Activated B cell treated with CpG ODN at 0.5 μM for 24 hours (primary cell): ENCODE measurements at regions of chr2 and their contacts with region 1.

Region 1: DNA sequence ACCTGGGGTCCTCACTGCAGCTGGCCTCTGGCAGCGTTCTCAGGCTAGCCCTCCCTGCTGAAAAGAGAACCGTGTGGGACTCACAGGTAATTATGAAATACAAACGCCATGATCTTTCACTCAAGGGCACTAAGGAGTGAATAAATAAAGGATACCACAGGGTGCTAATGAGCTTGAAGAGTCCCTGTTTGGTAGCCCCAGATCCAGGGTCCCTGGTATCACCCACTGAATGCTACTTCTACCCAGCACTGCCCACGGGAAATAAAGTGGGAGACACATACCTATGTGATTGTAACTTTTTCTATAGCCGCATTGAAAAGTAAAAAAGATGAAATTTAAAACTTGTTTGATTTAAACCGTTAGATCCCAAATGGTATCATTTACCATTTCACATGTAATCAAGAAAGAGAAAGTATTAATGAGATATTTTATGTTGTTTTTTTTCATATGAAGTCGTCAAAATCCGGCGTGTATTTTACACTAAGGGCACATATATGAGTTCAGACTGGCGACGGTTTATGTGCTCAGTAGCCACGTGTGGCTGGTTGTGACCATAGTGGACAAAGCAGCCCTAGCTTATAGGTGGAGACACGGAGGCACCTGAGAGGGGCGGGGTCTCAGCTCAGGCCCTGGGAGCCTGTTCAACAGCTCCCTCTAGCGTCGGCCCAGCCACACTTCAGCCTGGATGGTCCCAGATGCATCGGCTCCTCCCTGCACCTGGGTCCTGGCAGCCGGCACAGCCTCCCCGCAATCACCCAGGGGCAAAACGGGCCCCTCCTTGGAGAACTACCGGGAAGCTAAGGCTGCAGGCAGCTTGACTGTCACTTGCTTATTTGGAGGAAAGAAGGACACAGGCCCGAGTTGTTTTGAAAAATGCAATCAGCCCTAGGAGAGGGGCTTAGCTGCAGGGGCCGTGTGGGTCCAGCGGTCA is 39.2 kb downstream of the ODC1 start:
- DNase-seq: peak; percentile 70
- ATAC-seq: peak; percentile 77
- H3K4me3 Mint-ChIP-seq: peak overlapping the region; percentile 73
- H3K27ac Mint-ChIP-seq: peak overlapping the region; percentile 92
- H3K4me1 Mint-ChIP-seq: peaks cover 66% of the 10 kb centered on the region
- H3K27me3 Mint-ChIP-seq: no peaks in the 10 kb centered on the region
- CTCF ChIP-seq: peak; percentile 51

Region 2: GRCh38 chr2:8737571-8738175 is 1671.2 kb before region 1 on chr2:
- CTCF ChIA-PET with region 1: no interaction called
- POLR2A ChIA-PET with region 1: no interaction called
- intact Hi-C with region 1: no loop called
- DNase-seq: no peak
- ATAC-seq: no peak
- H3K4me3 Mint-ChIP-seq: no peak overlapping the region
- H3K27ac Mint-ChIP-seq: no peak overlapping the region
- H3K4me1 Mint-ChIP-seq: no peaks in the 10 kb centered on the region
- H3K27me3 Mint-ChIP-seq: no peaks in the 10 kb centered on the region
- CTCF ChIP-seq: no peak

Region 3: DNA sequence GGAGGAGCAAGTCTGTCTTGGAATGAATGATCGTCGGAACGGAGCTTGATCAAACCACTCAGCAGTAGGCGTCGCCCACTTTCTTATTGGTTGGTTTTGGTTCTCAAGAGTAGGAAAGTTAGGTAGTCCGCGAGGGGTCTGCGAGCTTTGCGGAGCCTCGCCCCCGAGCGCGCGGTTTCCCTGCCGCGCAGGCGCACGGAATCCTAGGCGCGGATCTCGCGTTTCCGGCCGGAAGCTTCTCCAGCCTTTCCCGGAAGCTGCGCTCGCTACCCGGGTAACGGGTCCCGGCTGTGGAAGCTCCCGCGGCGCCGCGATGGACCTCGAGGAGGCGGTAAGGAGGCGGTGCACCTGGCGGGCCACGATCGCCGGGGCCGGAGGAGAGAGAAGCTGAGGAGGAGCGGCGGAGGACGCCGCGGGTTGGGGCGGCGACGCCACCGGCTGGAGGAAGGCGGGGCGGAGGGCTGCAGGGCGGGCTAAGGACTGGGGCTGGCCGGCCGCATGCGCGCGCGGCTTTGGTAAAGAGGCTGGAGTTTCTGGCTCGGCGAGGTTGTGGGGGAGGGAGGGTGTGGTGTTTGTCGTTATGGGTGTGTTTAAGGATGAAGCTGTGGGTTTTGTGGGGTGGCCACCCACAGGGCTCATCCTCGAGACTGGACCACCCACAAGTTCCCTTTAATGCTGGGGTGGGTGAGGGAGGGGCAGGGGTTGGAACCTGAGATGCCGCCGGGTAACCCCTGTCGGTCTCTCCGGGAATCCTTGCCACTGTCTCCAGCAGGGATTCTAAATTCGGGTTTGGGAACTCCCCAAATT is 565.5 kb before region 1 on chr2 and contains the start of gene TAF1B:
- CTCF ChIA-PET with region 1: no interaction called
- POLR2A ChIA-PET with region 1: interaction called, 15 read pairs
- intact Hi-C with region 1: no loop called
- DNase-seq: peak; percentile 86
- ATAC-seq: peak; percentile 87
- H3K4me3 Mint-ChIP-seq: peak within 1 kb of the TSS; percentile 94
- H3K27ac Mint-ChIP-seq: peak within 1 kb of the TSS; percentile 91
- H3K4me1 Mint-ChIP-seq: peaks cover 34% of the 10 kb centered on the region
- H3K27me3 Mint-ChIP-seq: no peaks in the 10 kb centered on the region
- CTCF ChIP-seq: no peak
- total RNA-seq, gene TAF1B: 26.4 and 28.7 TPM in 2 replicates

Region 4: GRCh38 chr2:10122386-10123280 is 286.3 kb before region 1 on chr2 and contains the start of gene RRM2:
- CTCF ChIA-PET with region 1: interaction called, 82 read pairs
- POLR2A ChIA-PET with region 1: interaction called, 4 read pairs
- intact Hi-C with region 1: loop called (anchors 1 kb)
- DNase-seq: peak; percentile 77
- ATAC-seq: peak; percentile 82
- H3K4me3 Mint-ChIP-seq: peak within 1 kb of the TSS; percentile 97
- H3K27ac Mint-ChIP-seq: peak within 1 kb of the TSS; percentile 12
- H3K4me1 Mint-ChIP-seq: peaks cover 35% of the 10 kb centered on the region
- H3K27me3 Mint-ChIP-seq: peaks cover 8% of the 10 kb centered on the region
- CTCF ChIP-seq: no peak
- total RNA-seq, gene RRM2: 8.6 and 9.3 TPM in 2 replicates

Region 5: GRCh38 chr2:10267551-10268465 is 141.1 kb before region 1 on chr2:
- CTCF ChIA-PET with region 1: interaction called, 46 read pairs
- POLR2A ChIA-PET with region 1: interaction called, 6 read pairs
- intact Hi-C with region 1: loop called (anchors 1 kb)
- DNase-seq: no peak
- ATAC-seq: no peak
- H3K4me3 Mint-ChIP-seq: no peak overlapping the region
- H3K27ac Mint-ChIP-seq: no peak overlapping the region
- H3K4me1 Mint-ChIP-seq: peaks cover 6% of the 10 kb centered on the region
- H3K27me3 Mint-ChIP-seq: no peaks in the 10 kb centered on the region
- CTCF ChIP-seq: no peak

Region 6: DNA sequence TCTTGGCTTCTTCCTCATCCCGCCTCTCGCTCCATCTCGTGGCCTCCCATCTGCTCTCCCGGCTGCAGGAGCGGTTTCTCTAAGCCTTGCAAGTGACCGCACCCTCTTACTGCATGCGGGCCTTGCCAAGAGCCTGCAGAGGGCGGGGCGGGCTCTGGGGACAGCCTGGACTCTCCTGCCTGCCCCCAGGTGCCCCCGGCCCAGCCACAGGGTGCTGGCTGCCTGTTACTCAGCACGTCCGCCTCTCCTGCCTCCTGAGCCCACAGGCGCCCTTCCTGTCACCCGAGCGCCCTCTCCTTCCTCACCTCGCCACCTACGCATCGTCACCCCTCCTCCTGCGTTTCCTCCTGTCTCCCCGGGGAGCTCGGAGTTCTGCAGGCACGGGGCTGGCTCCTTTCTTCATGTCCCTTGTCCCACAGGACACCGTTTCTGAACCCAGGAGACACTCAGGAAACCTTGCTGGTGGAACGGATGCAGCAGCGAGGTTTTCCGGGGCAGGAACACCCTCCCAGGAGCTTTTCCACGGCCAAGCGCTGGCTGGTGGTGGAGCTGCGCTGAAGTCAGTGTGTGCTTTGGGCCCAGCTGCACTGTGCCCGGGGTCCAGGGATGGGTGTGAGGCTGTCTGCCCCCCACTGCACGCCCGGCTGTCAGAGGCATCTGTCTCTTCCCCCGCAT is 77.8 kb before region 1 on chr2:
- CTCF ChIA-PET with region 1: interaction called, 20 read pairs
- POLR2A ChIA-PET with region 1: interaction called, 15 read pairs
- intact Hi-C with region 1: loop called (anchors 1 kb)
- DNase-seq: peak; percentile 31
- ATAC-seq: peak; percentile 49
- H3K4me3 Mint-ChIP-seq: peak overlapping the region; percentile 79
- H3K27ac Mint-ChIP-seq: peak overlapping the region; percentile 65
- H3K4me1 Mint-ChIP-seq: peaks cover 70% of the 10 kb centered on the region
- H3K27me3 Mint-ChIP-seq: no peaks in the 10 kb centered on the region
- CTCF ChIP-seq: no peak

Region 7: DNA sequence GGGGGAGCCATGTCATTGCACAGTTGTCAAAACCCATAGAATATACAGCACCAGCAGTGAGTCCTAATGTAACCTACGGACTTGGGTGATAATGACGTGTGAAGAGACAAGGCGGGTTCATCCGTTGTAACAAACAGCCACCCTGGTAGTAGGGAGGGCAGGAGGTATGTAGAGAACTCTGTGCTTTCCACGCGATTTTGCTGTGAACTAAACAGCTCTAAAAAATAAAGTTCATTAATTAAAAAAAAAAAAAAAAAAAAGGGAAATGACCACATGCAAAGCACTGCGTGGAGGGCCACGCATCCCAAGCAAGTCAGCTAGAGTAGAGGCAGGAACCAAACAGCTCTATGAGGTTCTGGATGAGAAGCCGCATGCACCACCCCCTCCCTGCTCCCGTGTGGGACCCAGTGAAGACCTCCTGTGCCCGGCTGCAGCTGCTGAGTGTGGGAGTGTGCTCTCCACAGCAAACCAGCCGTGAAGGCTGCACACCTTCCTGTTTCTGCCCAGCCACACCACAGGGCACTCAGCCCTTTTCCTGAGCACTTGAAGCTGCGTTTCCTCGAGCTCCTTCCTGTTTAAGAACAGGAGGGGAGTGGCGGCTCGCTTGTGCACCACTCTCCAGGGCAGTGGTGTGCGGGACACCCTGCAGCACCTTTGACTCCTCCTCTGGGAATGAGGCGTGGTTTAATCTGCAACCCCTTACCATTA is 26.4 kb before region 1 on chr2:
- CTCF ChIA-PET with region 1: interaction called, 49 read pairs
- POLR2A ChIA-PET with region 1: interaction called, 90 read pairs
- intact Hi-C with region 1: loop called (anchors 1 kb)
- DNase-seq: peak; percentile 46
- ATAC-seq: peak; percentile 64
- H3K4me3 Mint-ChIP-seq: peak overlapping the region; percentile 58
- H3K27ac Mint-ChIP-seq: peak overlapping the region; percentile 59
- H3K4me1 Mint-ChIP-seq: peaks cover 91% of the 10 kb centered on the region
- H3K27me3 Mint-ChIP-seq: no peaks in the 10 kb centered on the region
- CTCF ChIP-seq: no peak

Region 8: DNA sequence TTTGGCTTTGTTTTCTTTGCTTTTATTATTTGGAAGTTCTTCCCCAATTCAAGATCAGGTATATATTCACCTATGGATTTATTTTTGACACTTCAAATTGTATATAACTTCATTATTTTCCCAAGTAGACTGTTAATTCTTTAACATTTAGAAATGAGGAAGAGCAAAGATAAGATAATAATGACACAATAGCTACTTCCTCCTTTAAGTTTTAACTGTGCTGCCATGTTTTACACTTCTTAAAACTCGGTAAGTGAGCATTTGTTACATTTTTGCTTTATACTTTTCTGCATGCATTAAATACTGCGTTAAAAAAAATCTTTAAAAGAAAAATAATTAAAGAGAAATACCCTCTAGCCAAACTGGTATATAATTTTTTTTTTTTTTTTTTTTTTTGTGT is 778.8 kb after region 1 on chr2:
- CTCF ChIA-PET with region 1: no interaction called
- POLR2A ChIA-PET with region 1: interaction called, 10 read pairs
- intact Hi-C with region 1: no loop called
- DNase-seq: no peak
- ATAC-seq: no peak
- H3K4me3 Mint-ChIP-seq: no peak overlapping the region
- H3K27ac Mint-ChIP-seq: no peak overlapping the region
- H3K4me1 Mint-ChIP-seq: no peaks in the 10 kb centered on the region
- H3K27me3 Mint-ChIP-seq: no peaks in the 10 kb centered on the region
- CTCF ChIP-seq: no peak